ENCODE measurements at regions of chr6 and their contacts with region 1.

Region 1: GRCh38 chr6:106979427-106979884 is 4.9 kb upstream of the CD24 start:
- DNase-seq: peak; percentile 88
- H3K4me3 ChIP-seq: no peak overlapping the region
- H3K27ac ChIP-seq: no peak overlapping the region
- H3K4me1 ChIP-seq: no peaks in the 10 kb centered on the region
- H3K27me3 ChIP-seq: peaks cover 28% of the 10 kb centered on the region
- CTCF ChIP-seq: peak; percentile 96

Region 2: DNA sequence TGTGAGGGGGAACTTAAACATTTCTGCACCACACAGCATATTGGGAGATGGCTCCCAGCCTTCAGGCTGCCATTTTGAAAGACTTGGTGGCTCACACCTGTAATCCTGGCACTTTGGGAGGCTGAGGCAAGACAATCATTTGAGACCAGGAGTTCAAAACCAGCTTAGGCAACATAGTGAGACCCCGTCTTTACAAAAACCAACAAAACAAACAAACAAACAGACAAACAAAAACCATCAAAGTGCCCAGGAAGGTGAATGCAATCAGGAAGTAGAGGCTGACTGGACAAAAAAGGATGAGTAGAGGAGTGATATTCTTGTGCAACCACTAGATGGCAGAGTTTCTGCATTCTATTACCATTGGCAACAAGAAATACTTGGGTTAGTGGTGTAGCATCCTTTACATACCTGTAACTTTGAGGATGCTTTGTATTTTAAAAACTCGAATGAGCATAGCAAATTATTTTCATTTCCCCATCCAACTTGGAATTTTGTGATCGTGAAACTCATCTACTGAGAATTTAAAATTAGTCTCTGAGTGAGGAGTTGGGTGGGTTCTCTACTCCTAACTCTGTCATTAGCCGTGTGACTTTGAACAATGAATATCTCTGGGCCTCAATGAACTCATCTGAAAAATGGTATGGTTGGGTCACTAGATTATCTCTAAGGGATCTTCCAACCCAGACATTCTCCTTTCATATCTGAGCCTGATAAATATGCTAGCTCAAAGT is 534.5 kb before region 1 on chr6:
- CTCF ChIA-PET with region 1: interaction called, 4 read pairs
- POLR2A ChIA-PET with region 1: no interaction called
- intact Hi-C with region 1: loop called (anchors 5 kb)
- DNase-seq: peak; percentile 72
- H3K4me3 ChIP-seq: no peak overlapping the region
- H3K27ac ChIP-seq: no peak overlapping the region
- H3K4me1 ChIP-seq: peaks cover 4% of the 10 kb centered on the region
- H3K27me3 ChIP-seq: peaks cover 12% of the 10 kb centered on the region
- CTCF ChIP-seq: peak; percentile 79

Region 3: GRCh38 chr6:106568530-106568929 is 410.9 kb before region 1 on chr6:
- CTCF ChIA-PET with region 1: no interaction called
- POLR2A ChIA-PET with region 1: no interaction called
- intact Hi-C with region 1: loop called (anchors 5 kb)
- DNase-seq: no peak
- H3K4me3 ChIP-seq: no peak overlapping the region
- H3K27ac ChIP-seq: no peak overlapping the region
- H3K4me1 ChIP-seq: no peaks in the 10 kb centered on the region
- H3K27me3 ChIP-seq: no peaks in the 10 kb centered on the region
- CTCF ChIP-seq: no peak

Region 4: DNA sequence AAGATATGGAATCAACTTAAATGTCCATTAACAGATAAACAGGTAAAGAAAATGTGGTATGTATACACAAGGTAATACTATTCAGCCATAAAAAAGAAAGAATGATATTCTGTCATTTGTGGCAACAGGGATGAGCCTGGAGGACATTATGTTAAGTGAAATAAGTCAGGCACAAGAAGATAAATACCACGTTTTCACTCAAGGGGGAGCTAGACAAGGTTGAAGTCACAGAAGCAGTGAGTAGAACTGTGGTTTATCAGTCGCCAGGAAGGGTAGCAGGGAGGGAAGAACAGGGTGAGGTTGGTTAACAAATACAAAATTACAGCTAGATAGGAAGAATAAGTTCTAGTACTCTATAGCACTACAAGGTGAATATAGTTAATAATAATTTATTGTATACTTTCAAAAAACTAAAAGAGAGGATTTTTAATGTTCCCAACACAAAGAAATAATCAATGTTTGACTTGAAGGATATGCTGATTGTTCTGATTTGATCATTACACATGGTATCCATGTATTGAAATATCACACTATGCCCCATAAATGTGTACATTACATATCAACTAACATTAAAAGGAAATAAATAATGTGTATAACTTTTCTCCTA is 371.3 kb before region 1 on chr6:
- CTCF ChIA-PET with region 1: interaction called, 8 read pairs
- POLR2A ChIA-PET with region 1: no interaction called
- intact Hi-C with region 1: loop called (anchors 1 kb)
- DNase-seq: peak; percentile 73
- H3K4me3 ChIP-seq: no peak overlapping the region
- H3K27ac ChIP-seq: no peak overlapping the region
- H3K4me1 ChIP-seq: no peaks in the 10 kb centered on the region
- H3K27me3 ChIP-seq: no peaks in the 10 kb centered on the region
- CTCF ChIP-seq: peak; percentile 68

Measured in A673 (cell line).